ENCODE measurements at regions of chr11 and their contacts with region 1.

Region 1: GRCh38 chr11:105229257-105229656 is 89.7 kb upstream of the CARD18 start:
- DNase-seq: no peak
- ATAC-seq: no peak

Region 2: DNA sequence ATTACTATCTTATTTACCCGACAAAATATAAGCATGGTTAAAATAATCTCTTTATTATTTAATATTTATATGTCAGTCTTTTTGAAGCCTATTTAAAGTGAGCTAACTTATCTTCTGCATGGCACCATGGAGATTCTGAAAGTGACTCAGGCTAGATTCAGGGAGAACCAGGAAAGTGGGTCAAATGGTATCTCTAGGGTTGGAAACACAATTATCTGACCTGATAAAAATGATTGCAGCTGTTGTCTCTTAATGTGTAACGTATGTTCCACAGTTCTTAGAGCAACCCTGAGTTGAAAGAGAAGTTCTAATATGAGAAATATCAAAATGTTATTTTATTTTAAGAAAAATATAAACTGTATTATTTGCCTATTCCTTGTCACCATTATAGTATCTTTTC is 53.4 kb after region 1 on chr11:
- intact Hi-C with region 1: loop called (anchors 10 kb)
- DNase-seq: no peak
- ATAC-seq: no peak

Region 3: GRCh38 chr11:105324156-105324555 is 94.9 kb after region 1 on chr11:
- intact Hi-C with region 1: no loop called
- DNase-seq: no peak
- ATAC-seq: no peak

Measured in left ventricle myocardium superior (tissue), 1 donor.